ENCODE measurements at regions of chrX and their contacts with region 1.

Region 1: DNA sequence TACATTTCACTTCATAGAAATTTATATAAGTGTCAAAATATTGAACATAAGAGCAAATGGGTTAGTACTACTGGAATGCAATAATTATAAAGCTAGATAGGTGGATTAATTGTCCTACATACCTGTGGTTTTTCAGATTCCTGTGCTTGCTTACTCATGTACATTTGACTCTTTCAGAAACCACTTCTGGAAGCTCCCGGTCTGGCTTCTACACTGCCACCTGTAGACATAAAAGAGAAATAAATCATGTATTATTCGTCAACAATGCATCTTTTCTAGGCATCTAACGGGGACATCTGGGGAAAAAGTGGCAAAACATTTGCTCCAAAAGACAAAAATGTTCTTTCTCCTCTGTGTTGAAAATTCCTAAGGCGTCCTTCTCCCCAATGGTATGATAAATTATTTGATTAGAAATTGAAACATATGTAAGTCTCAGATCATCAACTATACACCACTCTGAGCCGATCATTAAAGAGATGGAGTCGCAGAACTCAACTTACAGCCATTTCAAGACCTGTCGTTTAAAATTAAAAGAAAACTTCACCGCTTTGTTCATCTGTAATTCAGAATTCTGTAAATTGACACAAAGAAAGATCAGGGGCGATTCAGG is 648.7 kb upstream of the DIPK2B start:
- DNase-seq: peak; percentile 86
- ATAC-seq: peak; percentile 33
- H3K4me3 ChIP-seq: peak overlapping the region; percentile 90
- H3K27ac ChIP-seq: peak overlapping the region; percentile 15; the same call in 1 of the 2 replicates
- H3K4me1 ChIP-seq: peaks cover 2% of the 10 kb centered on the region; the same call in 1 of the 2 replicates
- H3K27me3 ChIP-seq: no peaks in the 10 kb centered on the region
- CTCF ChIP-seq: peak; percentile 46
- POLR2A ChIP-seq: no peak
- RAD21 ChIP-seq: peak; percentile 28

Region 2: DNA sequence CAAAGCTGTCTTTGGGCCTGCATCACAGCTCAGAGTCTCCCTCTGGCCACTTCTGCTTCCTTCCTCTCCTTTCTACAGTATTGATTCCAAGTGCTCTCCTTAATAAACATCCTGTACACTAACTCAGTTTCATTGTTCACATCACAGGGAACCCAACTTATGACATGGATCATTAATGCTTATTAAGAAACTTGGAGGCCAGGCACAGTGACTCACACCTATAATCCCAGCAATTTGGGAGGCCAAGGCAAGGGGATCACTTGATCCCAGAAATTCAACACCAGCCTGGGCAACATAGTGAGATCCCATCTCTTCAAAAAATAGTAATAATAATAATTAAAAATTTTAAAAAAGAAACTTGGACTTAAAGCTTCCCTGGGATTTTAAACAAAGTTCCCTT is 1416.7 kb before region 1 on chrX:
- CTCF ChIA-PET with region 1: no interaction called
- POLR2A ChIA-PET with region 1: no interaction called
- dilution Hi-C with region 1: no loop called
- in situ Hi-C with region 1: no loop called
- intact Hi-C with region 1: no loop called
- DNase-seq: peak; percentile 3
- ATAC-seq: no peak
- H3K4me3 ChIP-seq: no peak overlapping the region
- H3K27ac ChIP-seq: no peak overlapping the region
- H3K4me1 ChIP-seq: no peaks in the 10 kb centered on the region
- H3K27me3 ChIP-seq: peaks cover 1% of the 10 kb centered on the region
- CTCF ChIP-seq: no peak
- POLR2A ChIP-seq: no peak
- RAD21 ChIP-seq: no peak

Region 3: DNA sequence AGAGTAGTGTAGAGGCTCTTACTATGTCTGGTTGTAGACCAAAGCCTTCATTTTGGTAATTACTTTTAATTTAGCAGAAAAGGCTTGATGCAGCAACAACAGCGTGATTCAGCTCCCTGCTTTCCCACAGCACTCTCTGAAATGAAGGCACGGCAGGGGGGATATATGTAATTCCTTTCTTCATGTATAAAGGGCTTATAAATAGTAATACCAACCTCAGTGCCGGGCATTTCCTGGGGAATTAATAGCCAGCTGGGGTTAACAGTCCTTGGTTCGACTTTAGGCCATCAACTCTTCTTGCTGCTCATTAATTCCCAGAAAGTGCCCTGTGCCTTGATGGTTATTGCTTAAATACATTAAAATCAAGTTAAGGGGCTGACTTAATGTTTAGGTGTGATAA is 26.8 kb after region 1 on chrX:
- CTCF ChIA-PET with region 1: no interaction called
- POLR2A ChIA-PET with region 1: no interaction called
- dilution Hi-C with region 1: no loop called
- in situ Hi-C with region 1: no loop called
- intact Hi-C with region 1: no loop called
- DNase-seq: no peak
- ATAC-seq: no peak
- H3K4me3 ChIP-seq: no peak overlapping the region
- H3K27ac ChIP-seq: no peak overlapping the region
- H3K4me1 ChIP-seq: no peaks in the 10 kb centered on the region
- H3K27me3 ChIP-seq: peaks cover 10% of the 10 kb centered on the region
- CTCF ChIP-seq: no peak
- POLR2A ChIP-seq: no peak
- RAD21 ChIP-seq: no peak

Region 4: DNA sequence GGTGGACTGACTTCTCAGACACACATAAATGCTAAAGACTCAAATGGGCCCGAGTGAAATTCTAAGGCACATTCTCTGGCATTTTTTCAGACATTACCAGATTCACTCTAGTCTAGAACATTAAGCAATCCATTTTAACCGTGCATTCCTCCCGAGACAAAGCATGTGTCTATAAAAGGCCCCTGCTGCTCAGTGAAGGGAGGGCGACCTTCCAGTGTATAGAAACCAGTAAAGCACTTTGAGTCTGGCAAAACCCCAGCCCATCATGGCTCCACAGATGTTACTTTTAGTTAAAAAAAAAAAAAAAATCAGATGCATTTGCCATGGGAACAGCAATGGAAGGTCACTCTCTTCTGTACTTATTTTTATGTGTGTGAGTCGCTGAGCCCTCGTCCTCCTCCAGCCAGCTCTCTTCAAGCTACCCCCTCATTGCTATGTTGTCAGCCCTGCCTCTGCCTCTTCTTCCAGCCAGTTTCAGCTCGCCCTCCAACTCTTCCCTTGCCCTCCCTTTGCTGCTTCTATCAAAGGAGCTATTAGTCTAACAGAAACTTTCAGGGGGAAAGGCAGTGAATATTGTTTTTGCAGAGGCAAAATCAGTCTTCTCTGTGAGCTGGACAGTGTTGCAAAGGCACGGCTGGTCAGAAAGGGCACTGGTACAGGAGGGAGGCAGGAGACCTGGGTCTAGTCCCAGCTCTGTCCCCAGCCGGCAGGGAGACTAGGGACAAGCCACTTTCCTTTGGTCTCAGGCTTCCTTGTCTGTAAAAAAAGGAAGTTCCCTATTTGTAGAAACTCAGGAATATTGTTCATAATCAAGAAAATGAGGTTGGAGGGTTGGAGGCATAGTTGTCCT is 51.6 kb after region 1 on chrX:
- CTCF ChIA-PET with region 1: interaction called, 3 read pairs
- POLR2A ChIA-PET with region 1: interaction called, 14 read pairs
- dilution Hi-C with region 1: no loop called
- in situ Hi-C with region 1: no loop called
- intact Hi-C with region 1: no loop called
- DNase-seq: no peak
- ATAC-seq: peak; percentile 40; the same call in 1 of the 2 replicates
- H3K4me3 ChIP-seq: no peak overlapping the region
- H3K27ac ChIP-seq: no peak overlapping the region
- H3K4me1 ChIP-seq: no peaks in the 10 kb centered on the region
- H3K27me3 ChIP-seq: peaks cover 22% of the 10 kb centered on the region
- CTCF ChIP-seq: no peak
- POLR2A ChIP-seq: no peak
- RAD21 ChIP-seq: no peak

Region 5: GRCh38 chrX:46381630-46382029 is 532.3 kb after region 1 on chrX:
- CTCF ChIA-PET with region 1: no interaction called
- POLR2A ChIA-PET with region 1: no interaction called
- dilution Hi-C with region 1: no loop called
- in situ Hi-C with region 1: loop called (anchors 10 kb)
- intact Hi-C with region 1: no loop called
- DNase-seq: peak; percentile 17
- ATAC-seq: peak; percentile 61
- H3K4me3 ChIP-seq: no peak overlapping the region
- H3K27ac ChIP-seq: no peak overlapping the region
- H3K4me1 ChIP-seq: no peaks in the 10 kb centered on the region
- H3K27me3 ChIP-seq: no peaks in the 10 kb centered on the region
- CTCF ChIP-seq: peak; percentile 40
- POLR2A ChIP-seq: no peak
- RAD21 ChIP-seq: peak; percentile 31; the same call in 1 of the 2 replicates